ENCODE measurements at regions of chr1 and their contacts with region 1.

Region 1: DNA sequence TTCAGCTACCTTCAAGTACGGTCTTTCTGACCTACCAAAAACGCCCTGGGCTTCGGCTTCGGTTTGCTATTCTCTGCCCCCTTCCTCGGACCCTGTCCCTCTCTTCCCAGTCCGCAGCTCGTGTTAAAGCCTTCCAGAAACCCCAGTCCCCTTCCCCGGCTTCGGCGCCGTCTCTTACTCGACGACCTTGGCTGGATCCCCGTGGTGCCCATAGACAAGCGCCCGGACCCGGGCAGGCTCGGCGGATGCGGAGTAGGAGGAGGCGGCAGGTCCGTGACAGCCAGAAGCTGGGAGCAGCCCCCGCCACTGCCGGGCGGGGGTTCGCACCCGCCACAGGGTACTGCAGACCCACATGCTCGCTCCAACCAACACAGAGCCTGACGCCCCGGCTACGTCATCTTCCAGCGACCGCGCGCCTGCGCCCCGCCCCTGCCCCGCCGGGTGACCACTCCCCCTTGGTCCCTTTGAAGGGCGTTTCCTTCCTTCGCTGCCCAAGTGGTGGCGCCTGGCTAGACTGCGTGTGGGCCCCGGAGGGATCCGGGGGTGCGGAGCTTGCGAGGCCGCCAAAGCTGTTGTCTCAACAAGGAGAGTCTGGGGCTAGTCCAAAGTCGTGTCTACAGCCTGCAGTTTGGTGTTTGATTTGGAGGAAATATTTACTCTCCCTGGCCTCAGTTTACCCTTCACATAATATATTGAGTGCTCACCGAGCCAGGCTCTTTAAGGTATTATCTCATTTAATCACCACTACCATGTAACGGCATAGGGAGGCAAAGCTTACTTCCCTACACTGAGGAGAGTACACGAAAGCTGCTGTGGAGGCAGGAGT is at the start of gene MECR:
- DNase-seq: peak; percentile 85
- H3K4me3 ChIP-seq: peak within 1 kb of the TSS; percentile 75 to 96 (median 92)
- H3K27ac ChIP-seq: peak within 1 kb of the TSS; percentile 85
- H3K4me1 ChIP-seq: peaks cover 13% of the 10 kb centered on the region
- H3K27me3 ChIP-seq: no peaks in the 10 kb centered on the region
- CTCF ChIP-seq: peak in 1 of 2 donors; percentile 33
- total RNA-seq, gene MECR: 28.7 to 35.4 TPM

Region 2: DNA sequence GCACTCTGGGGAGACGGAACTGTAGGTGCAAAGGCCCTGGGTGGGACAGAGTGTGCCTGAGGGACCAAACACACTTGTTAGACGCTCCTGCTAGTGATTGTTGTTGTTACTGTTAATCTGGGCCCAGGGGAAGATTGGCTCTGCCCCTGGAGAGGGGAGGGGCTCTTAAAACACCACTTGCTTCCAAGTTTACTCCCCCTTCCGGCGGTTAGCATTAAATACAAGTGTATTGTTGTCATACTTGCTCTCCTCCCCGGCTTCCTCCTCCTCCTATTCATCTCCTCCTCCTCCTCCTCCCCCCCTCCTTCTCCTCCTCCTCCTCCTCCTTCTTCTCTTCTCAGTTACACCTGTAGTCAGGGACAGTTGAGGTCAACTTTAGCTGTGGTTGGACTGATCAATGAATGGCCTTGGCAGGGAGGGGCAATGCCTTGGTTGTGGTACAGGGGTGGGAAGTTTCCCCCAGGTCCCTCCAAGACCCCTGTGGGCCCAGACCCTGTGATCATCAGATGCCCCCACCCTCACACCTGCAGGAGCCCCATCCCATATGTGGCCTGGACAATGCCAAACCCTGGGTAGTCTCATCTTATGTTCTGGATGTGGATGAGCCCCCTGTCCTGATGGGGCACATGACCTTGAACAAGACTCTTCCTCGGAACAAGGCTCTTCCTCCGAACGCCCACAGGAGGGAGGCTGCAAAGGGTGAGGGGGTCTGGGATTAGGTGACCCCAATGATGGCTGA is 222.9 kb after region 1 on chr1:
- CTCF ChIA-PET with region 1: no interaction called
- dilution Hi-C with region 1: no loop called
- in situ Hi-C with region 1: loop called in 1 of 2 experiments (anchors 25 kb)
- intact Hi-C with region 1: no loop called
- DNase-seq: peak; percentile 15
- H3K4me3 ChIP-seq: no peak overlapping the region
- H3K27ac ChIP-seq: no peak overlapping the region
- H3K4me1 ChIP-seq: no peaks in the 10 kb centered on the region
- H3K27me3 ChIP-seq: no peaks in the 10 kb centered on the region
- CTCF ChIP-seq: peak; percentile 28 to 43

Region 3: GRCh38 chr1:29502911-29503840 is 272.4 kb after region 1 on chr1:
- CTCF ChIA-PET with region 1: no interaction called
- dilution Hi-C with region 1: no loop called
- in situ Hi-C with region 1: no loop called
- intact Hi-C with region 1: no loop called
- DNase-seq: no peak
- H3K4me3 ChIP-seq: no peak overlapping the region
- H3K27ac ChIP-seq: no peak overlapping the region
- H3K4me1 ChIP-seq: no peaks in the 10 kb centered on the region
- H3K27me3 ChIP-seq: no peaks in the 10 kb centered on the region
- CTCF ChIP-seq: no peak

Region 4: GRCh38 chr1:29569971-29570634 is 339.3 kb after region 1 on chr1:
- CTCF ChIA-PET with region 1: no interaction called
- dilution Hi-C with region 1: no loop called
- in situ Hi-C with region 1: no loop called
- intact Hi-C with region 1: loop called (anchors 10 kb)
- DNase-seq: peak; percentile 100
- H3K4me3 ChIP-seq: no peak overlapping the region
- H3K27ac ChIP-seq: peak overlapping the region; percentile 59
- H3K4me1 ChIP-seq: peaks cover 47% of the 10 kb centered on the region
- H3K27me3 ChIP-seq: no peaks in the 10 kb centered on the region
- CTCF ChIP-seq: no peak

Region 5: DNA sequence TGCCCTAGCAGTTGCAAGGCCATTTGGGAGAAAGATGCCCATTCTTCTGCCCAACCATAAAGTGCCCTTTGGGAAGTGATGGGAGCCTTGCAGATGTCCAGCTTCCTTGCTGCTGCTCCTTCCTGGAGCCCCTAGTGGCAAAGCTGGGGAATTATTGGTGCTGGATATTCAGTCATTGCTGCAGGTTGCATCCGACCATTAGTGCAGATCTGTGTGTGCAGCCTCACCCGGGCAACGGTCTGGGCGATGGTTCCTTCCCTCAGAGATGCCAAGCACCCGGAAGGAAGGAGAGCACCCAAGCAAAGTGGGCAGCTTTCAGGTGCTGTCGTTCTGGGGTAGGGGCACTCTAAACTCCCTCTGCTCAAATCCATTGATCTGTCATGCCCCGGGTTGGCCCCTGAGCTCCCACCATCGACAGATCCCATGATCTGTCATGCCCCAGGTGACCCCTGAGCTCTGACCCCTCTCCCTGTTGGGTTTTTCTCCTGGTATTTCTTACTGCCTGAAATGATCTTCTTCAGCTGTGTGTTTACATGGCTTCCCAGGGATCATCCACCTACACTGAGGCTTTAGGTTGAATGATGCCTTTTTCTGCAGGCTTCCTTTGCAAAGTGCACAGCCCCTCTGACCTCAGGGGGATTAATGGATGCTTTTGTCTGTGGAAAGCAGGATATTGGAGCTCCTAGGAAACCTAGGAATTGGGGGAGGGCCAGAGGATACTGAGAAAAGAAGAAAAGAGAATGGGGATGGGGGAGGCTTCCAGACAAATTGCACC is 473.0 kb after region 1 on chr1:
- CTCF ChIA-PET with region 1: no interaction called
- dilution Hi-C with region 1: loop called (anchors 25 kb)
- in situ Hi-C with region 1: loop called (anchors 25 kb)
- intact Hi-C with region 1: no loop called
- DNase-seq: peak; percentile 45
- H3K4me3 ChIP-seq: no peak overlapping the region
- H3K27ac ChIP-seq: no peak overlapping the region
- H3K4me1 ChIP-seq: peaks cover 16% of the 10 kb centered on the region
- H3K27me3 ChIP-seq: no peaks in the 10 kb centered on the region
- CTCF ChIP-seq: peak; percentile 91 to 95

Region 6: GRCh38 chr1:30779294-30780071 is 1548.7 kb after region 1 on chr1:
- CTCF ChIA-PET with region 1: no interaction called
- dilution Hi-C with region 1: no loop called
- in situ Hi-C with region 1: no loop called
- intact Hi-C with region 1: loop called (anchors 5 kb)
- DNase-seq: peak; percentile 65
- H3K4me3 ChIP-seq: no peak overlapping the region
- H3K27ac ChIP-seq: no peak overlapping the region
- H3K4me1 ChIP-seq: peaks cover 9% of the 10 kb centered on the region
- H3K27me3 ChIP-seq: no peaks in the 10 kb centered on the region
- CTCF ChIP-seq: peak; percentile 78 to 97